Gastrocnemius medialis (tissue), 4 donors: ENCODE measurements at regions of chr4 and their contacts with region 1.

Region 1: GRCh38 chr4:38319456-38320342 is 344.3 kb upstream of the KLF3 start:
- DNase-seq: peak; percentile 80 to 91
- ATAC-seq: peak; percentile 73 to 90
- H3K4me3 ChIP-seq: peak overlapping the region; percentile 44 to 50 (median 46)
- H3K27ac ChIP-seq: peak overlapping the region; percentile 77 to 81 (median 81)
- H3K4me1 ChIP-seq: peaks cover 14 to 19% of the 10 kb centered on the region in 2 donors
- H3K27me3 ChIP-seq: no peaks in the 10 kb centered on the region
- CTCF ChIP-seq: peak; percentile 91 to 100 (median 93)
- POLR2A ChIP-seq: no peak

Region 2: GRCh38 chr4:38071801-38072431 is 247.8 kb before region 1 on chr4:
- in situ Hi-C with region 1: loop called in 3 of 4 experiments (anchors 10 to 25 kb)
- intact Hi-C with region 1: loop called (anchors 5 kb)
- DNase-seq: peak in 1 of 2 donors; percentile 53
- ATAC-seq: peak; percentile 82 to 96
- H3K4me3 ChIP-seq: no peak overlapping the region
- H3K27ac ChIP-seq: peak overlapping the region; percentile 1 to 73 (median 56)
- H3K4me1 ChIP-seq: peaks cover 34 to 46% of the 10 kb centered on the region in 2 donors
- H3K27me3 ChIP-seq: no peaks in the 10 kb centered on the region
- CTCF ChIP-seq: no peak
- POLR2A ChIP-seq: no peak

Region 3: GRCh38 chr4:38179690-38180377 is 139.9 kb before region 1 on chr4:
- in situ Hi-C with region 1: loop called in 3 of 4 experiments (anchors 5 to 10 kb)
- intact Hi-C with region 1: loop called (anchors 1 kb)
- DNase-seq: peak; percentile 52 to 59
- ATAC-seq: peak; percentile 72 to 78
- H3K4me3 ChIP-seq: no peak overlapping the region
- H3K27ac ChIP-seq: no peak overlapping the region
- H3K4me1 ChIP-seq: peaks cover 3 to 12% of the 10 kb centered on the region in 2 donors
- H3K27me3 ChIP-seq: no peaks in the 10 kb centered on the region
- CTCF ChIP-seq: peak; percentile 79 to 94 (median 88)
- POLR2A ChIP-seq: no peak

Region 4: GRCh38 chr4:38387348-38387747 is 67.6 kb after region 1 on chr4:
- in situ Hi-C with region 1: loop called in 1 of 4 experiments (anchors 10 kb)
- intact Hi-C with region 1: no loop called
- DNase-seq: peak; percentile 62 to 64
- ATAC-seq: peak; percentile 79 to 83
- H3K4me3 ChIP-seq: no peak overlapping the region
- H3K27ac ChIP-seq: no peak overlapping the region
- H3K4me1 ChIP-seq: peaks cover 4 to 8% of the 10 kb centered on the region in 2 donors
- H3K27me3 ChIP-seq: no peaks in the 10 kb centered on the region
- CTCF ChIP-seq: no peak
- POLR2A ChIP-seq: no peak

Region 5: GRCh38 chr4:38663801-38664705 is 344.4 kb after region 1 on chr4 and contains the start of gene KLF3:
- in situ Hi-C with region 1: no loop called
- intact Hi-C with region 1: loop called (anchors 2 kb)
- DNase-seq: peak; percentile 88 to 92
- ATAC-seq: peak; percentile 65 to 70
- H3K4me3 ChIP-seq: peak within 1 kb of the TSS; percentile 94 to 99 (median 98)
- H3K27ac ChIP-seq: peak within 1 kb of the TSS; percentile 97 to 100 (median 98)
- H3K4me1 ChIP-seq: peaks cover 38 to 44% of the 10 kb centered on the region in 2 donors
- H3K27me3 ChIP-seq: no peaks in the 10 kb centered on the region
- CTCF ChIP-seq: no peak
- POLR2A ChIP-seq: peak; percentile 93 to 95
- total RNA-seq, gene KLF3: 12.7 to 26.5 (median 19.4) TPM

Region 6: DNA sequence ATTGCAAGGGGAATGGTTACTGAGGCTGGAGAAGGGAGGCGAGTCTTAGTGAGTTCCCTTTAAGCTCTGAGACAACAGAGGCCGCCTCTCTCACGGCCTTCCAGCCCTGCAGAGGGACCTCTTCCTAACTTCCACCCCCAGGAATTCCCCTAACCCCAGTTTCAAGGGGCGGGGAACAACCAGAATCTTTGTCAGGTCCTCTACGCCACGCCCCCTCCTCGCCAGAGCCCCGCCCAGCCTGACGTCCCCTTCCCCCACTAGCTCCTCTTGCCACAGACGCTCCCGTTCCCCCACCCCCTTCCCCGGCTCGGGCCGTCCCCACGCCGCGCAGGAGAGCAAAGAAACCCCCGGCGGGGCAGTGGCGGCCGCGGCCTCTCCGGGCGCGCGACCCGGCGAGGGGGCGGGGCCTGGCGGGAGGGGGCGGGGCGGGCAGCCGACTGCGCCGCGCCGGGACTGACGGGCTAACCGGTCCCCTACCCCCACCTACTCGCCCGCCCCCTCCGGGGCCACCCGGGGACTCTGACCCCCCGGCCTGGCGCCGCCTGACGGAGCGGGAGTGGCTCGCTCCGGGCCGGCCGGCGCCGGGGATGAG is 724.8 kb after region 1 on chr4:
- in situ Hi-C with region 1: no loop called
- intact Hi-C with region 1: loop called (anchors 10 kb)
- DNase-seq: peak; percentile 81 to 86
- ATAC-seq: peak; percentile 88 to 91
- H3K4me3 ChIP-seq: peak overlapping the region; percentile 50 to 72 (median 57)
- H3K27ac ChIP-seq: peak overlapping the region; percentile 68 to 87 (median 78)
- H3K4me1 ChIP-seq: peaks cover 6 to 17% of the 10 kb centered on the region in 2 donors
- H3K27me3 ChIP-seq: no peaks in the 10 kb centered on the region
- CTCF ChIP-seq: no peak
- POLR2A ChIP-seq: no peak